ENCODE measurements at regions of chr2 and their contacts with region 1.

Region 1: GRCh38 chr2:216532562-216532961 is 33.9 kb downstream of the RPL37A start:
- DNase-seq: no peak
- H3K4me3 ChIP-seq: no peak overlapping the region
- H3K27ac ChIP-seq: no peak overlapping the region
- H3K4me1 ChIP-seq: peaks cover 47% of the 10 kb centered on the region
- H3K27me3 ChIP-seq: no peaks in the 10 kb centered on the region
- CTCF ChIP-seq: no peak

Region 2: GRCh38 chr2:216352653-216353270 is 179.8 kb before region 1 on chr2:
- CTCF ChIA-PET with region 1: no interaction called
- POLR2A ChIA-PET with region 1: no interaction called
- intact Hi-C with region 1: no loop called
- DNase-seq: no peak
- H3K4me3 ChIP-seq: no peak overlapping the region
- H3K27ac ChIP-seq: no peak overlapping the region
- H3K4me1 ChIP-seq: no peaks in the 10 kb centered on the region
- H3K27me3 ChIP-seq: no peaks in the 10 kb centered on the region
- CTCF ChIP-seq: no peak

Region 3: DNA sequence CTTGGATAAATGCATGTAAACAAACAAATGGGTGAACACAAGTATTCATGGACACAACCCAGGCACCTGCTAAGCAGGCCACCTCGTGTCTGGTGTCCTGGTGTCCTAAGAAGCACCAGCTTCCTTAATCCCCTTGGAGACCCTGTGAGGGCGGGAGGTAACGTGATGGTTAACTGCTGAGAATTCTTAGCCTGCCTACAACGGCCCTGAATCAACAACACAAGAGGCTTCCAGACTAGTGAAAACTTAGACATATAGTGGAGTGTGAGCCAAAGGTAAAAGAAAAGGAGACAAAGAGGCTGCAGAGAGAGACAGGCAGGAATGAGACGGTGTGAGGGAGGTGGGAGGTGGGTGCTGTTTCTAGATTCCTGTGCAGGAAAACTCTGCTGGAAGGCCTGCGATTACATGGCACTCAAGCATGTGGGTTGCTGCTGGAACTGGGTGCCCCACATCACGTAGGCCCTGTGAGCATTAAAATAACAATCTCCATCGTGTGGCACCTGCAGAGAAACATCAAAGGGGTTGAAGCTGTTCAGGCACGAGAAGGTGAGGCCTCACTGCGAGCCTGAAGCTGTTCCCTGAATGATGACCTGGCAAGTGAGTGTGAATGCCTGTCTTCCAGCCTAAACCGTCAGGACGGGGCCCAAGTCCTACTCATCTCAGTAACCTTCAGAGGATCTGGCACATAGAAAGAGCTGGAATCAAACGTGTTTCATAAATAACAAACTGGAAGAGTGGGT is 30.3 kb after region 1 on chr2:
- CTCF ChIA-PET with region 1: no interaction called
- POLR2A ChIA-PET with region 1: interaction called, 4 read pairs
- intact Hi-C with region 1: loop called (anchors 1 kb)
- DNase-seq: no peak
- H3K4me3 ChIP-seq: no peak overlapping the region
- H3K27ac ChIP-seq: no peak overlapping the region
- H3K4me1 ChIP-seq: peaks cover 4% of the 10 kb centered on the region
- H3K27me3 ChIP-seq: no peaks in the 10 kb centered on the region
- CTCF ChIP-seq: no peak

Measured in A673 (cell line).